RWPE1 (cell line): ENCODE measurements at regions of chr7 and their contacts with region 1.

Region 1: DNA sequence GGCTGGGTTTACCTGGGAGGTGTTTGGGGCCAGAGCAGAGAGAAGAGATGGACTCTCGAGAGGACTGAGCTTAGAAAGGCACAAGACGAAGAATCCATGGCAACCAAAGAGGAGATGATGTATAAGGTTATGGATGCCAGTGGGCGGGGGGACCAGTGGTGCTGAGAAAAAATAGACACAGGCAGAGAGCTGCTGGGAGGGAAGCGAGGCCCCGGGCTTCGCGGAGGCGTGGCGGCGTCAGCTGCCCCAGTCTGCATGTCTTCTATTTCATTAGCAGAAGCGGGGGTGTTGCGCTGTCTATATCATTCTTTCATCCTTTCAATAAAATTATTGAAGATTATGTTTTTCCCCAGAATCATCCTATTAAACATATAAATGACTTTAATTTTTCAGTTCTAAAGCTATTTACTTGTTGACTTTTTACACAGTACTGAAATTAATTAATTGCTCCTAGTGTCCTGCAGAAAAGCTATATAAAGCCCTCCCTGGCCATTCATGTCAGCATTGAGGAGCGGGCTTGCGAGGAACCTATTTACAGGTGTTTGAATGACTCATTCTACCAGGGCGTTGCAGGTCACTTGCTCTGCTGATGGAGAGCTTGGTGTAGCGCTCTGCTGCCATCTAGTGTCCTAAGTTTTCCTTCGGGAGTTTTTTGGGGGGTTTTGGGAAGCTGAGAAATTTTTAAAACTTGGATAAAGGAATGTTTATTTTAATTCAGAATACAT is 42.9 kb upstream of the BHLHA15 start:
- DNase-seq: peak; percentile 91
- H3K27ac ChIP-seq: no peak overlapping the region
- CTCF ChIP-seq: peak; percentile 96

Region 2: GRCh38 chr7:98014352-98014751 is 154.0 kb before region 1 on chr7:
- CTCF ChIA-PET with region 1: interaction called, 15 read pairs
- POLR2A ChIA-PET with region 1: no interaction called
- DNase-seq: no peak
- H3K27ac ChIP-seq: no peak overlapping the region
- CTCF ChIP-seq: no peak

Region 3: DNA sequence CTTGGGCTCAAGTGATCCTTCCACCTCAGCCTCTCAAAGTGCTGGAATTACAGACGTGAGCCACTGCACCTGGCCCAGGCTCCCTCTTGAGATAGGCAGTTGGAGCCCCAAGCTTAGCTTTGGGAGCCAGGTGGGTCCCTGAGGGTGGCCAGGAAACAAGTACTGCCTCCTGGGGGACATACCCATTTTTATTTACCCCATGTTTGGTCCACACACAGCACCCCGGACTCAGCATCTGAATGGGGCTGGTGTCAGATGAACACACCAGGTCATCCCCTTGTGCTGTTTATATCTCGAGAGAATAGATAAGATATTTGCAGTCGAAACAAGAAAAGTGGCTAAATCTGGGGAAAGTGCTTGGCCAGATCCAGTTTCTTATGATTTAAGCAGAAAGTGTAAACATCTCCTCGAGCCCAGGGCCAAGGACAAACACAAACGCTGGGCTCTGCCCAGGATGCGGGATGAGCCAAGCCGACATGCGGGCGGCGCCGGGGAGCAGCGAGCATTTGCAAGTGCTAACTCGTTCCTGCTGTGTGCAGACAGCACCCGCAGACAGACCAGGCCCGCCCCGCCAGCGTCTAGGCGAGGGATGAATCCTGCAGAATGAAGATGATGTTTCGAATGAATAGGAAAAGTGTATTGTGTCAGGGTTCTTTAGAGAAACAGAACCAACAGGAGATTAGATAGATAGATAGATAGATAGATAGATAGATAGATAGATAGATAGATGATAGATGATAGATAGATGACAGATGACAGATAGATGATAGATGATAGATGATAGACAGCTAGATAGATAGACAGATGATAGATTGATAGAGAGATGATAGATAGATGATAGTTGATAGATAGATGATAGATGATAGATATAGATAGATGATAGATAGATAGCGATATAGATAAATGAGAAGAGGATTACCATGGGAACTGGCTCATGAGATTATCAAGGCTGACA is 134.0 kb before region 1 on chr7:
- CTCF ChIA-PET with region 1: interaction called, 10 read pairs
- POLR2A ChIA-PET with region 1: no interaction called
- DNase-seq: peak; percentile 68
- H3K27ac ChIP-seq: peak overlapping the region; percentile 68
- CTCF ChIP-seq: no peak